Left lung (tissue), 14 donors: ENCODE measurements at regions of chr20 and their contacts with region 1.

Region 1: GRCh38 chr20:63858393-63859165 is 2.7 kb upstream of the ABHD16B start:
- DNase-seq: peak in 3 of 4 donors; percentile 31 to 74 (median 67)
- ATAC-seq: peak; percentile 8
- H3K4me3 ChIP-seq: no peak overlapping the region
- H3K27ac ChIP-seq: peak overlapping the region; percentile 17 to 70
- H3K4me1 ChIP-seq: peaks cover 38 to 80% of the 10 kb centered on the region in 2 donors
- H3K27me3 ChIP-seq: peaks cover 0 to 37% of the 10 kb centered on the region in 2 donors
- CTCF ChIP-seq: no peak

Region 2: GRCh38 chr20:63782051-63782471 is 76.5 kb before region 1 on chr20:
- intact Hi-C with region 1: loop called in 1 of 2 experiments (anchors 10 kb)
- DNase-seq: peak in 1 of 4 donors; percentile 45
- ATAC-seq: no peak
- H3K4me3 ChIP-seq: no peak overlapping the region
- H3K27ac ChIP-seq: no peak overlapping the region
- H3K4me1 ChIP-seq: no peaks in the 10 kb centered on the region
- H3K27me3 ChIP-seq: no peaks in the 10 kb centered on the region
- CTCF ChIP-seq: no peak